H1 (cell line): ENCODE measurements at regions of chr5 and their contacts with region 1.

Region 1: DNA sequence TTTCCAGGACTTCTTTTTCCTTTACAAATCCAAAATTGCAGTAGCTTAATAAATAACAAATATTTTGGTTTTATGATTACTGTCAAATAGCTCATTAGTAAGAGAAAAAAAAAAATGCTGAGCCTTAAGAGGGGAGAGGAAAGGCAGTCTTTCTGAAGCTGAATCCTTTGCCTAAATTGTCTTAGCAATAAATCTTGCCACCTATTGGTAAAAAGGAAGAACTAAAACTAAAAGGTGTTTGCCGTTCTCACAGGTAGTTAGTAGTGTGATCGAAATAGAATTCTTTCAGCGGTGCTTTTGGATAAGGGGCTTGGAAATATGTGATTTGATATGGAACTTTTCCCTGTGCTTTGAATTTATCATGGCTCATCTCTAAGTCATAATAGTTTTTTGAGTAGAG is 31.2 kb downstream of the PIK3R1 start:
- DNase-seq: no peak
- H3K4me3 ChIP-seq: no peak overlapping the region
- H3K27ac ChIP-seq: no peak overlapping the region
- H3K4me1 ChIP-seq: peaks cover 4 to 18% (median 10%) of the 10 kb centered on the region in 4 experiments; a peak in 5 of 7 replicates
- H3K27me3 ChIP-seq: no peaks in the 10 kb centered on the region
- CTCF ChIP-seq: peak in 1 of 3 experiments; percentile 36; a peak in 2 of 4 replicates
- EP300 ChIP-seq: no peak
- POLR2A ChIP-seq: no peak
- RAD21 ChIP-seq: peak; percentile 60 to 61

Region 2: GRCh38 chr5:68216245-68217046 is 30.4 kb before region 1 on chr5:
- CTCF ChIA-PET with region 1: interaction called, 13 read pairs
- POLR2A ChIA-PET with region 1: no interaction called
- DNase-seq: peak in 1 of 2 experiments; percentile 68
- H3K4me3 ChIP-seq: peak overlapping the region; percentile 59 to 96 (median 76)
- H3K27ac ChIP-seq: no peak overlapping the region
- H3K4me1 ChIP-seq: peaks cover 0 to 9% (median under 1%) of the 10 kb centered on the region in 4 experiments; a peak in 2 of 7 replicates
- H3K27me3 ChIP-seq: peaks cover 0 to 14% (median 7%) of the 10 kb centered on the region in 4 experiments; a peak in 4 of 7 replicates
- CTCF ChIP-seq: no peak
- EP300 ChIP-seq: no peak
- POLR2A ChIP-seq: no peak
- RAD21 ChIP-seq: peak; percentile 13 to 19; a peak in 3 of 4 replicates